ENCODE measurements at regions of chr12 and their contacts with region 1.

Region 1: DNA sequence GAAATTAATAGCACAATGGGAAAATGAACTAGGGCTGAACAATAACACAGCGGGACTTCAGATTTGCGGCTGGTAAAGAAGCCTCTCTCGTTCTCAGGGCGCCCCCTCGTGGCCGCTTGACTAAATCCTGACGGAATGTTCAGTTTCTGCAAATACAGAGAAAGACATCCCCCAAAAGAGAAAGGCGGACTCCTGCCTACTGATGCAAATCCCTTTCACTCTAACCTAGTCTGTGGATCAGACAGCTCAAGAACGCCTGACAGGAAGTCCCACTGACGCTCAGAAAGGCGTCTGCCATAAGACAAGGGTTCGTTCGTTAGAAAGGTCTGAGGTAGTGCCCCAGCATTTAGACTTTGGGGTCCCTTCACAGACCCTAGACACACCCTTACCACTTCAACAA is 2.5 kb downstream of the NUAK1 start:
- DNase-seq: peak; percentile 84 to 87 (median 85)
- ATAC-seq: peak; percentile 39 to 50 (median 41)
- H3K4me3 ChIP-seq: peak overlapping the region; percentile 5 to 89 (median 79)
- H3K27ac ChIP-seq: peak overlapping the region; percentile 39 to 100 (median 48)
- H3K4me1 ChIP-seq: peaks cover 0 to 47% (median 21%) of the 10 kb centered on the region in 4 donors
- H3K27me3 ChIP-seq: no peaks in the 10 kb centered on the region
- CTCF ChIP-seq: peak; percentile 79 to 87 (median 85)
- POLR2A ChIP-seq: no peak

Region 2: DNA sequence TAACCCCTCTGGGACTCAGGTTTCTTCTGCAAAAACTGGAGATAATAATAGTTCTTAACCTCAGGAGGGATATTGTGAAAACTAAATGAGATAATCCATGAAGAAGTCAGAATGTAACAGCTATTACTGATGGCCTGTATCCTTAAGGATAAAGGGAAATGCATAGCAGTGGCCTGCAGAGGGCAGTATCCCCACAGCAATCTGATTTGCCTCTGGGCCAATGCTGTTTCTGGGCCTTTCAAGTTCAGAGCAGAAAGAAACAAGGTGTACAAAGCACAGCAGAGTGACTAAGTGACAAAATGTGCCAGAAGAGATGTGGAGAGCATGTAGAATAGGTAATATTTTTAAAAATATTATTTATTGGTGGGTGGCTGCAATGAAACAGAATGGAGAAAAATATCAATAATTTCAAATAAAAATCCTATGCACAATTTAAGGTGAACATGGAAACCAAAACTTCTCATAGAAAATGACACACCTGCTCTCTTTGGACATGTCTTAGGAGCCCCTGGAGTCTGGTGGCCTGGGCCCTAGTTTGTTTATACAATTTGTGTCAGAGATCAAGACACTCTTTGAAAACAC is 715.5 kb before region 1 on chr12:
- intact Hi-C with region 1: loop called in 1 of 2 experiments (anchors 5 kb)
- DNase-seq: peak; percentile 65 to 77 (median 71)
- ATAC-seq: peak; percentile 97 to 99 (median 98)
- H3K4me3 ChIP-seq: no peak overlapping the region
- H3K27ac ChIP-seq: no peak overlapping the region
- H3K4me1 ChIP-seq: no peaks in the 10 kb centered on the region
- H3K27me3 ChIP-seq: no peaks in the 10 kb centered on the region
- CTCF ChIP-seq: peak; percentile 86 to 96 (median 94)
- POLR2A ChIP-seq: no peak

Region 3: DNA sequence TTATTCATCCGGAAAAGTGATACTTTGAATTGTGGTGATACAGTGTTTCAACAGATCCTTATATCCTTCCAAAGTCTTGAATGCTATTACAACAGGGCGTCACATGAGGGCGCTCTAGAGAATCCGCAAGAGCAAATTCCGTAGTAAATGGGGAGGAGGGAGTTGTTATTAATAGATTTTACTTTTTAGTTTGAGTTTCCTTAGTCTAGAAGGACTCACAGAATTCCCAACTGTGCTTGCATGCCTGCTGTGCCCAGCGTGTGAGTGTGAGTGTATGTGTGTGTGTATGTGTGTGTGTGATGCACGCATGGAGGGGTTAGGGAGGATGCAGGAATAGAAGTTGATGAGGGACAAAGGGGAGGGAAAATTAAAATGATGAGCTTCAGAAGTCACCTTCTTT is 430.5 kb before region 1 on chr12:
- intact Hi-C with region 1: loop called in 1 of 2 experiments (anchors 5 kb)
- DNase-seq: peak in 1 of 3 donors; percentile 52
- ATAC-seq: peak; percentile 73 to 86 (median 79)
- H3K4me3 ChIP-seq: no peak overlapping the region
- H3K27ac ChIP-seq: no peak overlapping the region
- H3K4me1 ChIP-seq: no peaks in the 10 kb centered on the region
- H3K27me3 ChIP-seq: no peaks in the 10 kb centered on the region
- CTCF ChIP-seq: peak; percentile 70 to 84 (median 78)
- POLR2A ChIP-seq: no peak

Region 4: DNA sequence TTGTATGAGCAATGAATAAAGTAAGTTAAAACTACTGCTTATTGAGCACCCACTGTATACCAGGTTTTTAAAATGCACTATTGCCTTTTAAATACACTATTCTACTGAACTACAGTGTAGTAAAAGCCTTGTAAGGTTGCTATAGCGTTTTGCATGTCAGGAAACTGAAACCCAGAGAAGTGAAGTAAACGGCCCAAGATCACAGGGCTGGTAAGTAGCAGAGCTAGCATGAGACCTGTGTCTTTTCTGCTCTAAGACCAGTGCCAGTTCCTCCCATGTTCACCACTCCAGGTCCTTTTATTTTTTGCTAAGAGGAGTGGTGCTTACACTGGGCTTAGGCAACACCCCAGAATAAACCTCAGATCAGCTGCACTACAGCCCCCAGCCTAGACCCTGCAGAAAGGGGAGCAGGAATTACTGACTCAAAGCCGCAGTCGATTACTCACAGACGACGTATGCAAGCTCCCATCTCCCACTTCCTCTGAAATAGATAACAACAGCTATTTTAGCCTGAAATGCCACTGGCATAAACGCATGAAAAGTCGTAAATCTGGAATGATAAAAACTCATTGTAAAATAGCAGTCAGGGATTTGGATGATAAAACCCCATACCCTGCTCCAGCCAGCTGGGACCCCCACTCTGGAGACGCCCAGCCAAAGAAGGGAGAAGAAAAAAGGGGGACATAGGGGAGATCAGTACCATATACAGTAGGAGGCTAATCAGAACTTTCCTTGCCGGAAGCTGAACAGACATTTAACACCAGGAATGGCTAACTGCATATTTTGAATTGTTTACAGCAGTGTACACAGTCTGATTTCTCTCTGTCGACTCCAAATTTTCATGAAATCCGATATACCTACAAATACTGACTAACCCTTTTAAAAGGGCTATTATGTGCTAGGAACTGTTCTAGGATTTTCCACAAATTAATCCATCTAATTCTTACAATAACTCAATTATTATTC is 105.8 kb before region 1 on chr12:
- intact Hi-C with region 1: loop called in 1 of 2 experiments (anchors 10 kb)
- DNase-seq: no peak
- ATAC-seq: peak; percentile 12 to 70 (median 52)
- H3K4me3 ChIP-seq: no peak overlapping the region
- H3K27ac ChIP-seq: no peak overlapping the region
- H3K4me1 ChIP-seq: no peaks in the 10 kb centered on the region
- H3K27me3 ChIP-seq: no peaks in the 10 kb centered on the region
- CTCF ChIP-seq: no peak
- POLR2A ChIP-seq: no peak